Breast epithelium (tissue), 4 donors: ENCODE measurements at regions of chr9 and their contacts with region 1.

Region 1: GRCh38 chr9:127450830-127451724 is at the starts of genes LRSAM1 and RPL12:
- DNase-seq: peak; percentile 95 to 99
- H3K4me3 ChIP-seq: peak within 1 kb of the TSS; percentile 81 to 90 (median 88)
- H3K27ac ChIP-seq: peak within 1 kb of the TSS; percentile 96 to 97
- H3K4me1 ChIP-seq: peaks cover 0 to 5% of the 10 kb centered on the region in 2 donors
- H3K27me3 ChIP-seq: no peaks in the 10 kb centered on the region
- CTCF ChIP-seq: no peak
- POLR2A ChIP-seq: peak; percentile 100
- total RNA-seq, gene LRSAM1: 11.7 to 21.3 (median 17.9) TPM
- total RNA-seq, gene RPL12: 2,790 to 3,232 (median 3,032) TPM

Region 2: GRCh38 chr9:126615175-126615814 is 835.8 kb before region 1 on chr9:
- intact Hi-C with region 1: loop called (anchors 5 kb)
- DNase-seq: peak; percentile 72 to 80
- H3K4me3 ChIP-seq: peak overlapping the region; percentile 23 to 84 (median 66)
- H3K27ac ChIP-seq: peak overlapping the region; percentile 91 to 93
- H3K4me1 ChIP-seq: peaks cover 3 to 11% of the 10 kb centered on the region in 2 donors
- H3K27me3 ChIP-seq: peaks cover 4 to 25% of the 10 kb centered on the region in 2 donors
- CTCF ChIP-seq: no peak
- POLR2A ChIP-seq: no peak

Region 3: GRCh38 chr9:127396808-127397497 is 54.1 kb before region 1 on chr9 and contains the start of gene SLC2A8:
- intact Hi-C with region 1: loop called (anchors 10 kb)
- DNase-seq: peak; percentile 99
- H3K4me3 ChIP-seq: peak within 1 kb of the TSS; percentile 80 to 86 (median 82)
- H3K27ac ChIP-seq: peak within 1 kb of the TSS; percentile 86
- H3K4me1 ChIP-seq: peaks cover 7 to 8% of the 10 kb centered on the region in 2 donors
- H3K27me3 ChIP-seq: no peaks in the 10 kb centered on the region
- CTCF ChIP-seq: no peak
- POLR2A ChIP-seq: no peak
- total RNA-seq, gene SLC2A8: 17.7 to 38.7 (median 20.9) TPM